ENCODE measurements at regions of chr12 and their contacts with region 1.

Region 1: DNA sequence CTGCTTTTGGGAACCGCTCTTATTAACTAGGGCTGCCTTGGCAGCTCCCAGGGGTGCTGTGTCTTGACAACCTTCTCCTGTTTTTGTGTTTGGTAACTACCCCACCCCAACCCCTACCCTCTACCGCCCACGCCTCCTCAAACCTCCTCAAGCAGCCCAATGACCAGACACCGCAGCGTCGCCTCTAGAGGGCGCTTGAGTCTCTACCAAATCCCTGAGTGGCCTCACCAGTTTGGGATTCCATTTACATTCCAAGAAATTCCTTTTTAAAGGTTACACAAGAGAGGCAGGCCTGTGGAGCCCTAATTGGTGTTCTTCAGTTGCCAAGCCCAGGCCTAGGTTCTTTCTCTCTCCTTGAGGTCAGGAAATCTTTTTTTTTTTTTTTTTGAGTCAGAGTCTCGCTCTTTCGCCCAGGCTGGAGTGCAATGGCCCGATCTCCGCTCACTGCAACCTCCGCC is 72.3 kb upstream of the USP44 start:
- DNase-seq: peak; percentile 62 to 69
- ATAC-seq: peak; percentile 52 to 89 (median 76)
- H3K4me3 ChIP-seq: no peak overlapping the region
- H3K27ac ChIP-seq: peak overlapping the region in 9 of 10 donors; percentile 2 to 86 (median 77)
- H3K4me1 ChIP-seq: peaks cover 0 to 22% (median 20%) of the 10 kb centered on the region in 9 donors
- H3K27me3 ChIP-seq: no peaks in the 10 kb centered on the region
- CTCF ChIP-seq: peak; percentile 38 to 73 (median 67)

Region 2: DNA sequence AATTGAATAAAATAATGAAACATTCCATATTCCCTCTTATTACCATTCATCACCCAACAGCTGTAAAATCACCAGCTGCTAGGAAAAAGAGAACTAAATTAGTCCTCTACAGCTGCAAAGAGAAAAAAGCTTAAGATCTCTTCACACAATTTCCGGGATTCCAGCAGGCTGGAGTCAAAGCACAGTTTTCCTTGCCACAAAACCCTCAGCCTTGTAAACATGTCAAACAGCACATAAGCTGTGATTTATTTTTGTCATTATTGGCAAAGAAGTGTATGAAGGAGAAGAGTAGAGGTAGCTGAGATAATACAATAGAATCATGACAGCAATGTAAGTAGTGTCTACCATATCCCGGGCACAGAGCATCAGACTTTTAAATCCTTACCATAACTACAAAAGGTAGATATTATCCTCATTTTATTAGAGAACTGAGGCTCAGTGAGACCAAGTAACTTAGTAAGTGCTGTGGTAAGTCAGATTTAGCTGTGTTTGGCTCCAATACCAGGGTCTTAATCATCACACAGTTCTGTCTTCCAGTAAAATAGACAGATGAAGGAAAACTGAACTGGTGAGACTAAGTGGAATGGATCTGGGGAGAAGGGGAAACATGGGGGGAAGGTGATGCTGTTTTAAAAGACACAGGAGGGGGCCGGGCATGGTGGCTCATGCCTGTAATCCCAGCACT is 109.7 kb after region 1 on chr12:
- intact Hi-C with region 1: loop called in 1 of 10 experiments (anchors 10 kb)
- DNase-seq: no peak
- ATAC-seq: peak in 7 of 8 donors; percentile 20 to 57 (median 30)
- H3K4me3 ChIP-seq: no peak overlapping the region
- H3K27ac ChIP-seq: peak overlapping the region; percentile 16 to 94 (median 62)
- H3K4me1 ChIP-seq: peaks cover 10 to 72% (median 38%) of the 10 kb centered on the region in 9 donors
- H3K27me3 ChIP-seq: no peaks in the 10 kb centered on the region
- CTCF ChIP-seq: no peak

Region 3: DNA sequence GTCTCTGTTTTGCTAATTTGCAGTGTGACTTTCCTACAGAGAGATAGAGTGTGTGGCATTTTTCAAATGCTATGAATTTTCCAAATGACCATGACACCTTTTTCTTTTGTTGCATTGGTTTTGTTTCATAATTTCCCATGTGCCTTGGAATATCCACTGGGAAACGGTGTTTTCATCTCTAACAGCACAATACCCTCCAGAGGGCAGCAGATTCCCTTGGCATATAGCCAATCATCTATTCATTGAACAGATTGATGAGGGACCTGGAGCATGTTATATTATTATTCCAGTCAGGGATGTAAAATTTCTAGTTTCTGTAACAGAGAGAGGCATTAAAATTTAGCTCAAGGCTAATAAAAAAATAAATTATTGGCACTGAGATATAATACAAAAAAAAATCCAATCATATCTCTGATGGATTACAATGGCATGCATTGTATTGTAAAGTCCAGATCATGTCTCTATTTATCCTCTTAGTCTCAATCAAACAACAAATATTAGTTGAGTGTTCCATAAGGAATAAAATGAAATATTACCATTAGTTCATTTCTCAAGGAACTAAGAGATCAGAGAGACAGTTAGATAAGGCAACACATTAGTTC is 196.6 kb after region 1 on chr12:
- intact Hi-C with region 1: loop called in 1 of 10 experiments (anchors 10 kb)
- DNase-seq: peak in 1 of 2 donors; percentile 36
- ATAC-seq: peak in 2 of 8 donors; percentile 29 to 56
- H3K4me3 ChIP-seq: no peak overlapping the region
- H3K27ac ChIP-seq: no peak overlapping the region
- H3K4me1 ChIP-seq: peaks cover 0 to 5% (median 0%) of the 10 kb centered on the region in 9 donors
- H3K27me3 ChIP-seq: no peaks in the 10 kb centered on the region
- CTCF ChIP-seq: peak; percentile 20 to 68 (median 57)

Measured in heart right ventricle (tissue), 16 donors.